ENCODE measurements at regions of chr17 and their contacts with region 1.

Region 1: GRCh38 chr17:40018211-40019121 is 3.2 kb downstream of the CSF3 start:
- DNase-seq: no peak
- ATAC-seq: no peak
- H3K4me3 Mint-ChIP-seq: no peak overlapping the region
- H3K27ac Mint-ChIP-seq: no peak overlapping the region
- H3K4me1 Mint-ChIP-seq: peaks cover 5% of the 10 kb centered on the region
- H3K27me3 Mint-ChIP-seq: peaks cover 2% of the 10 kb centered on the region
- CTCF ChIP-seq: no peak

Region 2: GRCh38 chr17:39744075-39744835 is 274.2 kb before region 1 on chr17:
- CTCF ChIA-PET with region 1: no interaction called
- POLR2A ChIA-PET with region 1: interaction called, 13 read pairs
- intact Hi-C with region 1: no loop called
- DNase-seq: no peak
- ATAC-seq: no peak
- H3K4me3 Mint-ChIP-seq: no peak overlapping the region
- H3K27ac Mint-ChIP-seq: no peak overlapping the region
- H3K4me1 Mint-ChIP-seq: peaks cover 14% of the 10 kb centered on the region
- H3K27me3 Mint-ChIP-seq: peaks cover 9% of the 10 kb centered on the region
- CTCF ChIP-seq: no peak

Region 3: GRCh38 chr17:40121181-40122135 is 103.0 kb after region 1 on chr17 and contains the start of gene MSL1:
- CTCF ChIA-PET with region 1: no interaction called
- POLR2A ChIA-PET with region 1: no interaction called
- intact Hi-C with region 1: loop called (anchors 1 kb)
- DNase-seq: peak; percentile 84
- ATAC-seq: peak; percentile 68
- H3K4me3 Mint-ChIP-seq: peak within 1 kb of the TSS; percentile 82
- H3K27ac Mint-ChIP-seq: peak within 1 kb of the TSS; percentile 50
- H3K4me1 Mint-ChIP-seq: peaks cover 39% of the 10 kb centered on the region
- H3K27me3 Mint-ChIP-seq: no peaks in the 10 kb centered on the region
- CTCF ChIP-seq: no peak
- total RNA-seq, gene MSL1: 84.5 and 101 TPM in 2 replicates

Measured in activated B cell treated with CpG ODN at 0.5 μM for 24 hours (primary cell).